ENCODE measurements at regions of chr17 and their contacts with region 1.

Region 1: DNA sequence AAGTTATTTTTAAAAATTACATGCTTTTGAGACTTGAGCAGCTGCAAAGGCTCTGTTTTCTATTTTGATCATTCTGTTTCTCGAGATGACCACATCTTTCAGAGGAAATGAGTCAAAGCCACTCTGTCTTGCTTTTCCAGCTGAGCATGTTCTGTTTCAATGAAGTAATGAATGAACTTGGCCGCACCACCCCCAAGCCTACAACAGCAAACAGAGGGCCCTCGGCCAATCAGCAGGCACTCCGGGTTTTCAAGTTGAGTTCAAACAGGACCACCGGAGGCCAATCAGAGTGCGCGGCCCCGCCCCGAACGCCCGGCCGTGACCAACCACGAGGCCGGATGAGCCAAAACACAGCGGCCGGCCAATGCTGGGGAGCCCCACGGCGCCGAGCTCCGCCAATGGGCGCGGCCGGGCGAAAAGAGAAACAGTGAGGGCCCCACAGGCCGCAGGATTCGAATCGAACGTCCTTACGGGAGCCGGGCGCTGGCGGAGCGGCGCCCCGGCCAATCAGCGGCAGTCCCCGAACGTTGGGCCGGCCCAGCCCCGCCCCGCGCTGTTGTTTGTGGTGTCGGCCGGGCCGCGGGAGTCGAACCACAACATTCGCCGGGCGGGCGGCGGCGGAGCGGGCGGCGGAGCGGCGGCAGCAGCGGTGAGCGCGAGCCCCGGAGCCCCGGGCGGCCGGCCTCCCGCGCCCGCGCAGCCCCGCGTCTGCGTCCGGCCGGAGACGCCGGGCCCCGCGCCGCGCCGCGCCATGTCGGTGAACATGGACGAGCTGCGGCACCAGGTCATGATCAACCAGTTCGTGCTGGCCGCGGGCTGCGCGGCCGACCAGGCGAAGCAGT is at the start of gene UBALD2:
- DNase-seq: peak; percentile 97 to 99 (median 98)
- ATAC-seq: peak; percentile 90
- H3K4me3 ChIP-seq: peak within 1 kb of the TSS; percentile 91
- H3K27ac ChIP-seq: peak within 1 kb of the TSS; percentile 83
- H3K4me1 ChIP-seq: peaks cover 37 to 38% of the 10 kb centered on the region in 2 experiments
- H3K27me3 ChIP-seq: no peaks in the 10 kb centered on the region
- CTCF ChIP-seq: no peak
- EP300 ChIP-seq: peak; percentile 8; the same call in 1 of the 2 replicates
- POLR2A ChIP-seq: peak; percentile 68
- RAD21 ChIP-seq: no peak
- polyA plus RNA-seq, gene UBALD2: 2.3 to 3.9 TPM

Region 2: DNA sequence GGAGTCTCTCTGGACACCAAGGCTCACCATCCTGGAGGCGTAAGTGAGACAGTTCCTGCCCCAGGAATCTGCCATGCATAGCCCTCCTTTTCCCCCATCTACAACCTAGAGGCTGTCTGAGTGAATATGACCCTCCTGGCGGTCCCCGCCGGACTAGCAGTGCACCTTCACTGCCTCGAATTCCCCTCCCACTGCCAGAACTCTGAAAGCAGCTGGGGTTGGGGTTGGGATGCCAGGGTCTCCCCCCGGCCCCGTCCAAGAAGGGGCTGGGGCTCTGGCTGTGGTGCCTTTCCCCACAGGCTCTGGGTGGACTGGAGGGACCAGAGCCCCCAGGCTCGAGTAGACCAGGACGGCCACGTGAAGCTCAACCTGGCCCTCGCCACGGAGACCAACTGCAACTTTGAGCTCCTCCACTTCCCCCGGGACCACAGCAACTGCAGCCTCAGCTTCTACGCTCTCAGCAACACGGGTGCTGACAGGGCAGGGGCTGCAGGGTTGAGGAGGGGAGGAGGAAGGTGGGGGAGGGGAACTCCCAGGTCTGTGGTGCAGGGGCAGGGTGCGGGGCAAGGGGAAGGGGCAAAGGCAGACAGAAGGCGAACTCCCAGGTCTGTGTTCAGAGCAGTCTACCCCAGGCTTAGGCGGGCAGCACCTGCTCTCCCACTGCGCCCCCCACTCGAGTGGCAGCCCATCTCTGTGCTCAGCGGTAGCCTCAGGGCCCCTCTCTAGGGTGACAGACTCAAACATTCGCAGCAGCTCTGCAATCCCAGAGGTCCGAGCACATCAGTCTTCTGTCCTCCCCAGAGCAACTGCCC is 184.8 kb before region 1 on chr17:
- CTCF ChIA-PET with region 1: no interaction called
- POLR2A ChIA-PET with region 1: no interaction called
- in situ Hi-C with region 1: no loop called
- intact Hi-C with region 1: no loop called
- DNase-seq: peak in 2 of 4 experiments; percentile 32 to 39
- ATAC-seq: peak; percentile 61
- H3K4me3 ChIP-seq: no peak overlapping the region
- H3K27ac ChIP-seq: no peak overlapping the region
- H3K4me1 ChIP-seq: peaks cover 0 to 51% of the 10 kb centered on the region in 2 experiments; a peak in 2 of 5 replicates
- H3K27me3 ChIP-seq: peaks cover 16 to 40% of the 10 kb centered on the region in 2 experiments; a peak in 4 of 5 replicates
- CTCF ChIP-seq: no peak
- EP300 ChIP-seq: no peak
- POLR2A ChIP-seq: no peak
- RAD21 ChIP-seq: no peak

Region 3: GRCh38 chr17:76121932-76122430 is 143.0 kb before region 1 on chr17:
- CTCF ChIA-PET with region 1: no interaction called
- POLR2A ChIA-PET with region 1: interaction called, 157 read pairs
- in situ Hi-C with region 1: no loop called
- intact Hi-C with region 1: no loop called
- DNase-seq: peak in 1 of 4 experiments; percentile 18
- ATAC-seq: no peak
- H3K4me3 ChIP-seq: no peak overlapping the region
- H3K27ac ChIP-seq: 0 out of 3 replicates have a peak overlapping the region, but pooled peaks have one; percentile 33
- H3K4me1 ChIP-seq: peaks cover 5 to 21% of the 10 kb centered on the region in 2 experiments; a peak in 4 of 5 replicates
- H3K27me3 ChIP-seq: no peaks in the 10 kb centered on the region
- CTCF ChIP-seq: no peak
- EP300 ChIP-seq: no peak
- POLR2A ChIP-seq: no peak
- RAD21 ChIP-seq: no peak

Region 4: DNA sequence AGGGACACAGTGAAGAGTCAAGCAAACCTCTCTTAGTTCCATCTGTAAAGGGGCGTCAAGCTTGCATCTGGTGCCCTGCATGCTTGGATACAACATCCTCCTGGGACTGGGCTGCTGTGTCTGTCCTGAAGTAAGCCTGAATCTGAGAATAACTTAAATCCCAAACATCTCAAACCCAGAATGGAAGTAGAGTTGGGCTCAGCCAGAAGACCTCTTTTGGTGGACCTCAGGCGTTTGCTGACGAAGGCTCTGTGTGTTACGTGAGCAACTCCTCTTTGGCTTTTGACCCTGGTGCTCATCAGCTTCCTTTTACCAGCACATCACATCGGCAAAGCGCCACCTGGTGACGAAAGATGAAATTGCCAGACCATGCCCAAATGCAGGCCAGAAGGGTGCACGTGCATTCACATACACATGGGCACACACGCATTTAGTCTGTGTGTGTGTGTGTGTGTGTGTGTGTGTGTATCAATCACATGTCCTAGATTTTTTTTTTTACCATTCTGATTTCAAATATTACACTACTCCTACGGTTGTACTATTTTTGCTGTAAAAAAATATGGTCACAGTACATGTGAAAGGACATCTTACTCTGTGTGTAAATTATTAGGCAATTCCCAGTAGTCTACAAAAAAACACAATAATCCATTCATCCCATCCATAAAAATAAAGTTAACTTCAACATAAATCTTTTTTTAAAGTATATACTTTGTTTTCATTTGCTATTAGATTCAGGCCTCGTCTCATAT is 82.8 kb before region 1 on chr17:
- CTCF ChIA-PET with region 1: no interaction called
- POLR2A ChIA-PET with region 1: interaction called, 93 read pairs
- in situ Hi-C with region 1: no loop called
- intact Hi-C with region 1: loop called (anchors 5 kb)
- DNase-seq: peak; percentile 81 to 91 (median 84)
- ATAC-seq: peak; percentile 88
- H3K4me3 ChIP-seq: no peak overlapping the region
- H3K27ac ChIP-seq: no peak overlapping the region
- H3K4me1 ChIP-seq: peaks cover 7 to 27% of the 10 kb centered on the region in 2 experiments; a peak in 3 of 5 replicates
- H3K27me3 ChIP-seq: no peaks in the 10 kb centered on the region
- CTCF ChIP-seq: peak; percentile 80 to 93 (median 86)
- EP300 ChIP-seq: no peak
- POLR2A ChIP-seq: no peak
- RAD21 ChIP-seq: peak; percentile 63 to 83

Region 5: GRCh38 chr17:76232342-76232741 is 32.6 kb before region 1 on chr17:
- CTCF ChIA-PET with region 1: no interaction called
- POLR2A ChIA-PET with region 1: interaction called, 42 read pairs
- in situ Hi-C with region 1: no loop called
- intact Hi-C with region 1: no loop called
- DNase-seq: no peak
- ATAC-seq: no peak
- H3K4me3 ChIP-seq: no peak overlapping the region
- H3K27ac ChIP-seq: peak overlapping the region; percentile 23; the same call in 1 of the 3 replicates
- H3K4me1 ChIP-seq: peaks cover 19% of the 10 kb centered on the region in 2 experiments; a peak in 4 of 5 replicates
- H3K27me3 ChIP-seq: no peaks in the 10 kb centered on the region
- CTCF ChIP-seq: no peak
- EP300 ChIP-seq: no peak
- POLR2A ChIP-seq: no peak
- RAD21 ChIP-seq: no peak

Region 6: DNA sequence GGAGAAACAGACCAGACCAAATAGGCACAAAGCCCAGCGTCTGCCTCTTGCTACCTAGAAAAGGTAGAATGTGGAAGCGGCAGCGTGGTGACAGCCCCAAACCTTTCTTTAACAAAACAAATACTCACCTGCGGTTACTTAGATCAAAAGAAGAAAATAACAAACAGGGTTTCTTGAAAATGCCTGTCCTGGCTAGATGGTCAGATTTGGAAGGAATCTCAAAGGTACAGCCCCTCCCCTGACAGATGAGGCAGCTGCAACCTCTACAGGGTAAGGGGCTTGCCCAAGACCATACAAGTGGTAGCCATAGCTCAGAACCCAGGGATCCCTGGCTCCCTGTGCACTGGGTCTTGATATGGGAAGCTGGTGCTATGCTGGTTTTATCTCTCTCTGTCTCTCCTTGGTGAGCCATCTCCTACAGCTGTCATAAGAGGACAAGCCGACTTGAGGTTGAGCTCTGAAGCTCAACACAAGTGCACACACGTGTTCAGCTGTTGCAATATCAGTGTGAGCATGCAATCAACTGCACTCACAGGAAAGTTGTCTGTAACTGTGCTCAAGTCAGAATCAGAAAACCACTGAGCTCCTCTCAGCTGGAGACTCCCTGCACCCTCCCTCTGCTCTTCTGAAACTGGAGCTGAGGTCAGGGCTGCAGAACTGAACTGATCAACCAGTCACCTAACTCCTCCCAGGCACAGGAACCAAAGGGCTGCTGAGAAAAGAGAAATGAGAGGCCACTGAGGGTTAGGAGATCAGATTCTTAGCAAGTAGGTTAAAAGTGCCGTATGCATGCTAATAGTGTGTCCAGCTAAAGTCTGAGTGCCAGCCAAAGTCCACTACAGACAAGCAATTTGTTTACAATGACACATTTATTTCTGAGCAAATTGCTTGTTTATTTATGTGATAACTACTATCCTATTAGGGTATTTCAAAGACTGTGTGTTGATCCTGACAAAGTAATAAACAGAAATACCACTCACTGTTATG is 18.6 kb before region 1 on chr17:
- CTCF ChIA-PET with region 1: no interaction called
- POLR2A ChIA-PET with region 1: interaction called, 227 read pairs
- in situ Hi-C with region 1: no loop called
- intact Hi-C with region 1: no loop called
- DNase-seq: peak in 2 of 4 experiments; percentile 41 to 60
- ATAC-seq: peak; percentile 92
- H3K4me3 ChIP-seq: no peak overlapping the region
- H3K27ac ChIP-seq: peak overlapping the region; percentile 24; the same call in 2 of the 3 replicates
- H3K4me1 ChIP-seq: peaks cover 21 to 29% of the 10 kb centered on the region in 2 experiments
- H3K27me3 ChIP-seq: no peaks in the 10 kb centered on the region
- CTCF ChIP-seq: no peak
- EP300 ChIP-seq: peak; percentile 37
- POLR2A ChIP-seq: no peak
- RAD21 ChIP-seq: peak in 1 of 2 experiments; percentile 21; a peak in 2 of 4 replicates

Region 7: GRCh38 chr17:76304226-76305134 is 39.5 kb after region 1 on chr17:
- CTCF ChIA-PET with region 1: no interaction called
- POLR2A ChIA-PET with region 1: no interaction called
- in situ Hi-C with region 1: no loop called
- intact Hi-C with region 1: no loop called
- DNase-seq: no peak
- ATAC-seq: no peak
- H3K4me3 ChIP-seq: no peak overlapping the region
- H3K27ac ChIP-seq: no peak overlapping the region
- H3K4me1 ChIP-seq: peaks cover 0 to 4% of the 10 kb centered on the region in 2 experiments; a peak in 3 of 5 replicates
- H3K27me3 ChIP-seq: no peaks in the 10 kb centered on the region
- CTCF ChIP-seq: no peak
- EP300 ChIP-seq: no peak
- POLR2A ChIP-seq: no peak
- RAD21 ChIP-seq: no peak

Measured in K562 (cell line).